ENCODE measurements at regions of chr10 and their contacts with region 1.

Region 1: GRCh38 chr10:11724938-11725776 is 17.0 kb upstream of the ECHDC3 start:
- DNase-seq: peak in 4 of 14 experiments; percentile 18 to 70 (median 52)
- ATAC-seq: peak; percentile 80
- H3K4me3 ChIP-seq: no peak overlapping the region
- H3K4me3 Mint-ChIP-seq: no peak overlapping the region
- H3K27ac ChIP-seq: no peak overlapping the region
- H3K27ac Mint-ChIP-seq: no peak overlapping the region
- H3K4me1 ChIP-seq: no peaks in the 10 kb centered on the region
- H3K4me1 Mint-ChIP-seq: peaks cover 6% of the 10 kb centered on the region
- H3K27me3 ChIP-seq: no peaks in the 10 kb centered on the region
- H3K27me3 Mint-ChIP-seq: no peaks in the 10 kb centered on the region
- CTCF ChIP-seq: peak; percentile 69

Region 2: DNA sequence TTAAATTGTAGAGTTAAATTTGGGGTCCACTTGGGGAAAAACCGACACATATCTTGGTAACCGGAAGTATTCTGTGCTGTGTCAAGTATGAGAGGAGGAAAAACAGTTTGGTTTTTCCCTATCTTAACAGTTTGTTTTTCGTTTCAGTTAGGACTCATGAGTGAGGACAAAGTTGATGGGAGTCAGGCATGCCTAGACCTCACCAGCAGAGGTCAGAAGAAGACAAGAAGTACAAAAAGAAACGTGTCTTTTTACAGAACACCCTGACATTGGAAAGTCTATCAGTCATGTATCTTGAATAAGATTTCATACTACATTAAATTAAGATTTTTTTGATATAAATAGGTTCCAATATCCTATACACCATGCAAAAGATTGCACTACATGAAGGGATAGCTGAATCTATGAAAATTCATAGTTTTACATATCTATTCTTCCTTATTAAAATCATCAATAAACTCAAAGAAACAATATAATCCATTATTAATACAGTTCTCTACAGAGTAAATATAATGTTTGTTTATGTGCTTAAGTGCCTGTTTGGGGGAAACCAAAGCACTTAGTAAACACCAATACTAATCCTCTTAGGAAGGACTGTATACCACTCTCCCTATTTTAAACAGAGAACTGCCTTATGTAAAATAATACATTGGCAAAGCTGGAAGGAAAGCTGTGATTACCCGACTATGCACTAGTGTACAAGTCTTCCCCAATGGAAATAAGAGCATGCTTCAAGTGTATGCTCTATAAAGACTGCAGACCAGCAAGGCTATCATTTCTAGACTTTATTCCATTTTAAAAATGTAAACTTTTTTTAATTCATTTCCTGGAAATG is 209.3 kb before region 1 on chr10:
- CTCF ChIA-PET with region 1: interaction called, 16 read pairs
- POLR2A ChIA-PET with region 1: interaction called, 8 read pairs
- intact Hi-C with region 1: loop called (anchors 1 to 2 kb)
- DNase-seq: peak; percentile 11 to 80 (median 28)
- ATAC-seq: peak; percentile 78
- H3K4me3 ChIP-seq: no peak overlapping the region
- H3K4me3 Mint-ChIP-seq: no peak overlapping the region
- H3K27ac ChIP-seq: no peak overlapping the region
- H3K27ac Mint-ChIP-seq: no peak overlapping the region
- H3K4me1 ChIP-seq: no peaks in the 10 kb centered on the region
- H3K4me1 Mint-ChIP-seq: peaks cover 4% of the 10 kb centered on the region
- H3K27me3 ChIP-seq: no peaks in the 10 kb centered on the region
- H3K27me3 Mint-ChIP-seq: no peaks in the 10 kb centered on the region
- CTCF ChIP-seq: peak; percentile 76

Region 3: DNA sequence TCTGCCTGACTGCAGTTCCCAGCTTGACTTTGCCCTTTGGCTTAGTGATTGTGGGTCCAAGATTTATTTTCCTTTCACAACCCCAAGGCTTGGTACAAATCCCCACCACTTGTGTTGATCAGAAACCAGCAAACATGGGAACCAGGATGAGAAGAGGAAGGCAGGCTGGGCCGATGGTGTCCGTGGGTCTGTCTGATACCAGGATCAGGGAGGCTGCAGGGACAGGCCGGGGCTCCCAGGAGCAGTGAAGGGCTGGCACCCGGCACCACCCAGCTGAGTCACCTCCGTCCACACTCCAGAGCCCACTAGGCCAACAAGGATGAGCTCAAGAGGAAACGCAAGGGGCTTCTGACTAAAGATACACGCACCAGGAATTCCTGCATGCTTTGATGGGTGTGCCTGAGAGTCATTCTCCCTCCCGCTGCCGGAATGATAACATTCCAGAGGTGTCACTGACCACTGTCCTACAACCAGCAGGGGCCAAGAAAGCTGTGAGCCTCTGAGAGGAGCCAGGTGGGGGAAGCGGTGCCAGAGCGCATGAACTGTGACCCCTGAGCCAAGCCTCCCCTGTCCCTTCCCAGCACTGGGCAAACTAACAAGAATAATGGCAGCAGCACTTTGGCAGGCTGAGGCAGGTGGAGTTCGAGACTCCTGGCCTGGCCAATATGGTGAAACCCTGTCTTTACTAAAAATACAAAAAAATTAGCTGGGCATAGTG is 68.8 kb after region 1 on chr10:
- CTCF ChIA-PET with region 1: no interaction called
- POLR2A ChIA-PET with region 1: no interaction called
- intact Hi-C with region 1: no loop called
- DNase-seq: no peak
- ATAC-seq: no peak
- H3K4me3 ChIP-seq: no peak overlapping the region
- H3K4me3 Mint-ChIP-seq: no peak overlapping the region
- H3K27ac ChIP-seq: no peak overlapping the region
- H3K27ac Mint-ChIP-seq: no peak overlapping the region
- H3K4me1 ChIP-seq: no peaks in the 10 kb centered on the region
- H3K4me1 Mint-ChIP-seq: no peaks in the 10 kb centered on the region
- H3K27me3 ChIP-seq: no peaks in the 10 kb centered on the region
- H3K27me3 Mint-ChIP-seq: no peaks in the 10 kb centered on the region
- CTCF ChIP-seq: no peak

Region 4: GRCh38 chr10:12588120-12588860 is 863.1 kb after region 1 on chr10:
- CTCF ChIA-PET with region 1: no interaction called
- POLR2A ChIA-PET with region 1: no interaction called
- intact Hi-C with region 1: no loop called
- DNase-seq: peak in 7 of 14 experiments; percentile 17 to 72 (median 51)
- ATAC-seq: peak; percentile 84
- H3K4me3 ChIP-seq: peak overlapping the region; percentile 43
- H3K4me3 Mint-ChIP-seq: peak overlapping the region; percentile 76
- H3K27ac ChIP-seq: no peak overlapping the region
- H3K27ac Mint-ChIP-seq: peak overlapping the region; percentile 96
- H3K4me1 ChIP-seq: peaks cover 36% of the 10 kb centered on the region
- H3K4me1 Mint-ChIP-seq: peaks cover 86% of the 10 kb centered on the region
- H3K27me3 ChIP-seq: no peaks in the 10 kb centered on the region
- H3K27me3 Mint-ChIP-seq: no peaks in the 10 kb centered on the region
- CTCF ChIP-seq: no peak